Activated CD4-positive, alpha-beta T cell treated with anti-CD3 and anti-CD28 coated beads, Interleukin-2, amount 10 ng/mL, durations not matched to agents 24 days and 14 days (primary cell): ENCODE measurements at regions of chr6 and their contacts with region 1.

Region 1: DNA sequence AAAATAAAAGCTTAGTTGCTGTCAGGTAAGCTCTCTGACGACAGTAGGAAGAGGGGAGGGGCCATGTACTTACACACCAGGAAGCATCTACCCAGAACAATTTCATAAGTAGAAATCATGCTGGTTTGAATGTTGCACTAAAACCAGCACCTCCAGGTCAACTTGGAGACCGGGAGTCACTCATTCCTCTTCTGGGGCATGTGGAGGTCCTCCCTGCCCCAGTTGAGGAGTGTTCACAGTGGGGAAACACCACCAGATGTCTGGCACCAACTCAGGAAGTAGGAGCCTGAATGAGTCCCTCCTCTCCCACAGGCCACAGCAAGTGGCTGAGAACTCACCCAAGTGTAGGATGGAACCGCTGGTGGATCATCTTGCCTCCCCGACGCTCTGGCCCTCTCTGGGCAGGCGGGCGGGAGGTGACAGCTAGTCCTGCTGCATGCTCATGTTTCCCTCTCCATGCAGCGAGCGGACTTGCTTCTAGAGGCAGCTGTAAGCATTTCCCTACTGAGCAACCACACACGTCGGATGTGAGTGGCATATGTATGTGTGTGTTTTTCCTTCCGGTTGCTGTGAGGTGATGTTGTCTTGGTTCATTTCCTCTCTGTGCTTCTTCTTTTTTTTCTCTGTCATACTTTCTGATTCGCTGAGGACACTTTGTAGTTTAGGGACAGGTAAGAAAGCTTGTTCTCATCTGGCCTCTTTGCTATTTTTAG is 149.5 kb upstream of the NEDD9 start:
- DNase-seq: peak; percentile 92
- H3K4me3 Mint-ChIP-seq: peak overlapping the region; percentile 71
- H3K27ac Mint-ChIP-seq: peak overlapping the region; percentile 87
- H3K4me1 Mint-ChIP-seq: peaks cover 62% of the 10 kb centered on the region
- H3K27me3 Mint-ChIP-seq: peaks cover 1% of the 10 kb centered on the region

Region 2: DNA sequence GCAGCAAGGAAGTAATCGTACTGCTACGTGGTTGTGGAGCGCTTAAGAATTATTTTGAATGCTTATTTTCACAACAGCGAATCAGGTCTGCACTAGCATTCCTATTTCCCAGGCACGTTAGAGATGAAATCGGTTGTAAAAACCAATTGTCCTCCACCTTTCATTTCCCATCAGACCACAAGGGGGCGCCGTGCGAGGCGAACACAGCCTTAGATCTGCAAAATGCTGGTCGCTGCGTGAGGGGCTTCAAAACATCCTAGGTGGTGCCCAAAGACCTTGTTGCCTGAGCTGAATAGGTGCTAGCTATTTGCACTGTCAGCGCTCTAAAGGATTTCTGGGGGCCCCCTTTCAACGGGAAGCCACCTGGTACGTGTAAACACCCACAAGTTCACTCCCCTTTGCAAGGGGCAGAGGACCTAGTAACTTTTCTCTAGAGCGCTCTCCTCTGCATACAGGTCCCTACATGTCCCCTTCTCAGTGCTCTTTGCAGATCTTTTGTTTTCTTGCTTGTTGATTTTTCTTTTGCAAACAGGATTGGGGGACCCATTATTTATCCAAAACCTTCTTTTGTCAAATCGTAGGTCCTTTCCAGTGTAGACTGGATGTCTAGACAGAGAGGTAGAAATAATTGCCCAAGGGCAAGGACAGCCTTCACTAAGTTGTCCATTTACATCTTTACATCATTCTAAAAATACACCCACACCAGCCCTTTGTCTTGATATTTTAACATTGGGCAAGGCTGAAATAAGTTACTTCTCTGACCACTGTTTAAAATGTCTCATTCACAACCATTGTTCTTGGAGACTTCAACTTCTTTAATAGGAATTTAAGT is 209.2 kb before region 1 on chr6:
- intact Hi-C with region 1: loop called (anchors 5 kb)
- DNase-seq: peak; percentile 92
- H3K4me3 Mint-ChIP-seq: peak overlapping the region; percentile 32
- H3K27ac Mint-ChIP-seq: peak overlapping the region; percentile 21
- H3K4me1 Mint-ChIP-seq: peaks cover 21% of the 10 kb centered on the region
- H3K27me3 Mint-ChIP-seq: no peaks in the 10 kb centered on the region

Region 3: DNA sequence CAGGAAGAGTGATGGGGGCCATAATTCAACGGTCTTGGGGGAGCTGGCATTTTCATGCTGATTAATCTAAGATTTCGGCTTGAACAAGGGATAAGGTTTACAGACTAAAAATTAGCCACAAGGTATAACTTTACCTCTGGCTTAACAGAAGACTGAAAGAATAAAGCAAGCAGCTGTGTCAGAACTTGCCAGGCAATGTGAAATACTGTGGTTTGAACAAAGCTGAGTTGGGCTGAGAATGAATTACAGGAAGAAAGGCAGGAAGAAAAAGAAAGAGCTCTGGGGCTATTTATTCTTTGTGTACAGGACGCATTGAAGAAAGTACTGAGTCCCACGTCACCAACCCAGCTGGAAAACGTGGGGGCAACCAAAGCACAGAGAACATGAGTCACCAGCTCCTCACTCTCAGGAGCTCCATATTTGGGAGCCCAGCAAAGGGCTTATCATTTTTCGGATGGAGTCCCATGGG is 28.0 kb before region 1 on chr6:
- intact Hi-C with region 1: loop called (anchors 1 kb)
- DNase-seq: peak; percentile 87
- H3K4me3 Mint-ChIP-seq: peak overlapping the region; percentile 68
- H3K27ac Mint-ChIP-seq: peak overlapping the region; percentile 86
- H3K4me1 Mint-ChIP-seq: peaks cover 73% of the 10 kb centered on the region
- H3K27me3 Mint-ChIP-seq: no peaks in the 10 kb centered on the region

Region 4: GRCh38 chr6:11404081-11404480 is 22.1 kb after region 1 on chr6:
- intact Hi-C with region 1: no loop called
- DNase-seq: no peak
- H3K4me3 Mint-ChIP-seq: no peak overlapping the region
- H3K27ac Mint-ChIP-seq: no peak overlapping the region
- H3K4me1 Mint-ChIP-seq: peaks cover 3% of the 10 kb centered on the region
- H3K27me3 Mint-ChIP-seq: no peaks in the 10 kb centered on the region

Region 5: DNA sequence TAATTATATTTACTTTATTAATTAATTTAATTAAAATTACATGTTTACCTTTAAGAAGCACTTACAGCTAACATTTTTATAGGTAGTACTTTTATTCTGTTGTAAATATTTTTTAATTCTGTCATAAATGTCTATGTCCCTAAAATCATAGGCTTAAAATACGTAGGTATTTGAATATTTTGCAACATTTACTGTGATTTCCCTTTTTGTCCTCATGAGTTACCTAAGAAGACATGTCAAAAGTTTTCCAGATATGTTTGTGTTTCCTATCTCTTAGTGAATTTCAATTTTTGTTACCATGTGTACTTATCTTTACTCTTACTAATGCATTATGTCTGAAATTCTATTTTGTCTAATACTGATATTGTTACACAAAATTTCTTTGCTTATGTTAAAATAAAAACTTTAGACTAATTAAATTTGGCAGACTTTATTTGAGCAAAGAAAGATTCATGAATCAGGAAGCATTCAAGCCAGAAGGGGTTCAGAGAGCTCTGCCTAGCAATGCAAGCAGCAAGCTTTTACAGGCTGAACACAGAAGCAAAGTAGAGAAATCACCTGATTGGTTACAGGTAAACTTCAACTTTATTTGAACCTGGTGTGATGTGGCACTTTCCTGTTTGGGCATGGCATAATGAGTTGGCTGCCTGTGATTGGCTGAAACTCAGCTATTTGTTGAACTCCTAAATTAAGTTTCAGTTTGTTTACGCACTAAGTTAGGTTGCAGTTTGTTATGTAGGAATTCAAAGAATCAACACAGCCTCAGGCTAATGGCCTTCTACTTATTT is 32.4 kb after region 1 on chr6:
- intact Hi-C with region 1: loop called (anchors 1 kb)
- DNase-seq: peak; percentile 78
- H3K4me3 Mint-ChIP-seq: no peak overlapping the region
- H3K27ac Mint-ChIP-seq: peak overlapping the region; percentile 41
- H3K4me1 Mint-ChIP-seq: peaks cover 44% of the 10 kb centered on the region
- H3K27me3 Mint-ChIP-seq: no peaks in the 10 kb centered on the region

Region 6: DNA sequence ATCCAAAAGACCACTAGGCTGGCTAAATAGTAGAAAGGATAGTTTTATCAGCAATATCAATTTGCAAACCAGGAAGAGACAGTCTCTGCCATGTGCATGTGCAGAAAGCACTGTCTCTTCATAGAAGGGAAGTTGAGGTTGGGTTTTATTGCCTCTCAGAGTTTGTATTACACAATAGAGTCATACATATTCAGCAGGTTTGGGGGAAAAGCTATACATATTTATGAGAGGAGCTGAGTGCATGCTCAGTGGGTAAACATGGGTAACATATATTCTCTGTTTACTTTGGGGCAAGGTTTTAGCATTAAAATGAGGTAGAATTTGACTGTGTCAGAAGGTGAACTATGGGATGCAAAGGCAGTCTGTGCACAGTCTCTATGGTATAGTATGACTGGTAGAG is 170.5 kb after region 1 on chr6:
- intact Hi-C with region 1: no loop called
- DNase-seq: no peak
- H3K4me3 Mint-ChIP-seq: no peak overlapping the region
- H3K27ac Mint-ChIP-seq: no peak overlapping the region
- H3K4me1 Mint-ChIP-seq: peaks cover 3% of the 10 kb centered on the region
- H3K27me3 Mint-ChIP-seq: peaks cover 12% of the 10 kb centered on the region